Heart left ventricle (tissue), 16 donors: ENCODE measurements at regions of chr4 and their contacts with region 1.

Region 1: GRCh38 chr4:53015681-53016080 is 153.6 kb downstream of the RASL11B start:
- DNase-seq: peak in 2 of 5 donors; percentile 19 to 36
- ATAC-seq: peak in 1 of 4 donors; percentile 35
- H3K4me3 ChIP-seq: no peak overlapping the region
- H3K27ac ChIP-seq: no peak overlapping the region
- H3K4me1 ChIP-seq: peaks cover 3 to 60% (median 42%) of the 10 kb centered on the region in 12 donors
- H3K27me3 ChIP-seq: no peaks in the 10 kb centered on the region
- CTCF ChIP-seq: peak; percentile 51 to 82 (median 72)
- POLR2A ChIP-seq: no peak

Region 2: DNA sequence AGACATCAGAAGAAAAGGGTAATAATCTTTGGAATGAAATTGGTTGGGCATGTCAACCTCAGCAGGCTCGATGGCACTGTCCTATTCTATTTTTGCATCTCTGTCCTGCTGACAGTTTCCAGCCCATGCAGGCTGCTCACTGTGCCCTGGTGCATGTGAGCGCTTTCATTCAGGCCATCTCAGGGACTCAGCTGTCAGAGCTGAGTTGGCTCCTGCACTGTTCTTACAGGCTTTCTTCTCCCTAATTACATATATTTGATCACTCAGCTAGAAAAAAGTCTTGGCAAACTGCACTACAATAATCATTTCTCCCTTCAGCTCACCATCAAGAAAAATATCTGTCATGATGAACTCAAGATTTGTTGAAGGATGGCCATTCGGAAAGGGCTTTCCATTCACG is 68.8 kb before region 1 on chr4:
- intact Hi-C with region 1: no loop called
- DNase-seq: peak in 4 of 5 donors; percentile 36 to 69 (median 53)
- ATAC-seq: peak; percentile 95 to 98 (median 96)
- H3K4me3 ChIP-seq: no peak overlapping the region
- H3K27ac ChIP-seq: peak overlapping the region; percentile 3 to 86 (median 70)
- H3K4me1 ChIP-seq: peaks cover 0 to 44% (median 9%) of the 10 kb centered on the region in 12 donors
- H3K27me3 ChIP-seq: no peaks in the 10 kb centered on the region
- CTCF ChIP-seq: no peak
- POLR2A ChIP-seq: no peak

Region 3: GRCh38 chr4:53119680-53120079 is 104.0 kb after region 1 on chr4:
- intact Hi-C with region 1: loop called in 1 of 10 experiments (anchors 10 kb)
- DNase-seq: no peak
- ATAC-seq: peak in 3 of 4 donors; percentile 47 to 70 (median 49)
- H3K4me3 ChIP-seq: no peak overlapping the region
- H3K27ac ChIP-seq: peak overlapping the region in 2 of 12 donors; percentile 21 to 79
- H3K4me1 ChIP-seq: peaks cover 0 to 35% (median 16%) of the 10 kb centered on the region in 12 donors
- H3K27me3 ChIP-seq: no peaks in the 10 kb centered on the region
- CTCF ChIP-seq: no peak
- POLR2A ChIP-seq: no peak

Region 4: GRCh38 chr4:53196882-53197771 is 181.4 kb after region 1 on chr4:
- intact Hi-C with region 1: loop called in 5 of 10 experiments (anchors 5 to 10 kb)
- DNase-seq: no peak
- ATAC-seq: peak in 2 of 4 donors; percentile 45 to 63
- H3K4me3 ChIP-seq: no peak overlapping the region
- H3K27ac ChIP-seq: no peak overlapping the region
- H3K4me1 ChIP-seq: peaks cover 0 to 11% (median 0%) of the 10 kb centered on the region in 12 donors
- H3K27me3 ChIP-seq: no peaks in the 10 kb centered on the region
- CTCF ChIP-seq: peak; percentile 67 to 89 (median 79)
- POLR2A ChIP-seq: no peak

Region 5: GRCh38 chr4:53365486-53366300 is 350.0 kb after region 1 on chr4 and contains the start of gene SCFD2:
- intact Hi-C with region 1: loop called in 6 of 10 experiments (anchors 10 kb)
- DNase-seq: peak; percentile 96 to 98 (median 98)
- ATAC-seq: peak; percentile 100
- H3K4me3 ChIP-seq: peak within 1 kb of the TSS; percentile 60 to 99 (median 88)
- H3K27ac ChIP-seq: peak within 1 kb of the TSS in 11 of 12 donors; percentile 24 to 84 (median 53)
- H3K4me1 ChIP-seq: peaks cover 0 to 47% (median 18%) of the 10 kb centered on the region in 12 donors
- H3K27me3 ChIP-seq: peaks cover 0 to 11% (median 0%) of the 10 kb centered on the region in 9 donors
- CTCF ChIP-seq: no peak
- POLR2A ChIP-seq: peak in 1 of 2 donors; percentile 46
- total RNA-seq, gene SCFD2: 6.5 to 14.0 (median 10.8) TPM

Region 6: DNA sequence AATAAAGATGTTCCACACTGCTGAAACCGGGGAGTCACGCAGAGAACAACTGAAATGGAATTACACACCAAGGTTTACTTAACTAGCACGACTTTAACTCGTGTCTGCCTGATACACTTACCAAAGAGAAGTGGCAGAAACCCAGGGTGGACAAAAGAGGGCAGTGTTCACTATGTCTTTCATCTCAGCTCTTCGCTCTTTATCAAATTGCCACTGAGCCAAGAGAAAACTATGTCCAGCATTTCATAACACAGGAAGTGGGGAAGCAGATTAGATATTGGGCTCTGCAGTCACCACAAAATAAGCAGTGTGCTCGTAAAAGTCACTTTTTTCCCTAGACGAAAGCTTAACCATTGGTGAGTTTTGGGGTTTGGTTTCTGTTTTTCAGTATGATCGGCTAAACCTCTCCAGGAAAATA is 893.0 kb after region 1 on chr4:
- intact Hi-C with region 1: loop called in 3 of 10 experiments (anchors 10 kb)
- DNase-seq: peak in 3 of 5 donors; percentile 37 to 50 (median 44)
- ATAC-seq: peak; percentile 84 to 94 (median 93)
- H3K4me3 ChIP-seq: peak overlapping the region in 8 of 12 donors; percentile 12 to 42 (median 27)
- H3K27ac ChIP-seq: peak overlapping the region in 8 of 12 donors; percentile 27 to 63 (median 40)
- H3K4me1 ChIP-seq: peaks cover 0 to 37% (median 14%) of the 10 kb centered on the region in 12 donors
- H3K27me3 ChIP-seq: peaks cover 0 to 32% (median 11%) of the 10 kb centered on the region in 9 donors
- CTCF ChIP-seq: peak; percentile 40 to 83 (median 67)
- POLR2A ChIP-seq: no peak

Region 7: GRCh38 chr4:54233277-54233696 is 1217.6 kb after region 1 on chr4:
- intact Hi-C with region 1: loop called (anchors 5 to 10 kb)
- DNase-seq: peak; percentile 85 to 92 (median 89)
- ATAC-seq: peak; percentile 64 to 88 (median 85)
- H3K4me3 ChIP-seq: peak overlapping the region; percentile 22 to 80 (median 58)
- H3K27ac ChIP-seq: peak overlapping the region in 11 of 12 donors; percentile 19 to 89 (median 68)
- H3K4me1 ChIP-seq: peaks cover 6 to 51% (median 40%) of the 10 kb centered on the region in 12 donors
- H3K27me3 ChIP-seq: peaks cover 26 to 51% (median 43%) of the 10 kb centered on the region in 9 donors
- CTCF ChIP-seq: peak; percentile 67 to 89 (median 80)
- POLR2A ChIP-seq: no peak